ENCODE measurements at regions of chr10 and their contacts with region 1.

Region 1: GRCh38 chr10:33419311-33419710 is 84.8 kb upstream of the NRP1 start:
- DNase-seq: no peak
- H3K4me3 ChIP-seq: no peak overlapping the region
- H3K27me3 ChIP-seq: no peaks in the 10 kb centered on the region
- CTCF ChIP-seq: no peak

Region 2: DNA sequence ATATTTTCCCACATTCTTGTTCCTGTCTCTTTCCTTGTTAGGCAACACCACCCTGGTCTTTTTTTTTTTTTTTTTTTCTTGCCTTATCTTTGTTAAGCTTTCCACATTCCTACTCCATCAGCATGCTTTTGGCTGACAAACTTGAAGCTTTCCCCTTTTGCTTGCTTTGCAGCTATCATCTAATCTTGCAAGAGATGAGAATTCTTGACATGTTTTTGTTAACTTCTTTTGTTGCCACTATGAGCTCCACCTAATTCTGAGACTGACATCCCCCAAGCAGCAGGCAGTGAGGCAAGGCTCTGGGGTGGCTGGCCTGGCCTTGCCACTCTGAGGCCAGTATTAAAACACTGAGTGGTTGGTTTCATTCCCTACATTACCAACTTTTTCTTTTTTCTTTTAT is 32.3 kb before region 1 on chr10:
- CTCF ChIA-PET with region 1: no interaction called
- POLR2A ChIA-PET with region 1: interaction called, 15 read pairs
- DNase-seq: no peak
- H3K4me3 ChIP-seq: no peak overlapping the region
- H3K27me3 ChIP-seq: no peaks in the 10 kb centered on the region
- CTCF ChIP-seq: no peak

Region 3: DNA sequence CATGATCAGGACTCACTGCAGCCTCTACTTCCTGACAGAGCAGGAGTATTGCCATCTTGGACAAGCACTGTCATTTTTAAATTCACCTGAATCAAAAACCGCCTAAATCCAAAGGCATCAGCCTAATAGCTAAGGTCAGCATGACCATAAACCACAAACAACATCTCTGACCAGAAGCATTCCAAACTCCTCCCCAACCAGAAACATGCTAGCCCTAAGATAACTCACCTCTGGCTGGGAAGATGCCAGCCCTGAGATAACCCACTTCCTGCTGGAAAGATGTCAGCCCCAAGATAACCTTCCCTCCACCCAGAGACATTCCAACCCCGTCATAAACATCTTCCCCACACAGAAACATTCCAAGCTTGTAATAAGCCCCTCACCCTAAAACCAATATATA is 165.3 kb after region 1 on chr10:
- CTCF ChIA-PET with region 1: no interaction called
- POLR2A ChIA-PET with region 1: no interaction called
- DNase-seq: no peak
- H3K4me3 ChIP-seq: no peak overlapping the region
- H3K27me3 ChIP-seq: peaks cover 3% of the 10 kb centered on the region; the same call in 1 of the 2 replicates
- CTCF ChIP-seq: no peak

Measured in BJ (cell line).